Heart right ventricle (tissue), 16 donors: ENCODE measurements at regions of chr9 and their contacts with region 1.

Region 1: GRCh38 chr9:87157366-87158031 is 210.2 kb upstream of the GAS1 start:
- DNase-seq: no peak
- ATAC-seq: peak in 2 of 8 donors; percentile 19 to 45
- H3K4me3 ChIP-seq: no peak overlapping the region
- H3K27ac ChIP-seq: no peak overlapping the region
- H3K4me1 ChIP-seq: peaks cover 0 to 13% (median 0%) of the 10 kb centered on the region in 9 donors
- H3K27me3 ChIP-seq: no peaks in the 10 kb centered on the region
- CTCF ChIP-seq: no peak

Region 2: DNA sequence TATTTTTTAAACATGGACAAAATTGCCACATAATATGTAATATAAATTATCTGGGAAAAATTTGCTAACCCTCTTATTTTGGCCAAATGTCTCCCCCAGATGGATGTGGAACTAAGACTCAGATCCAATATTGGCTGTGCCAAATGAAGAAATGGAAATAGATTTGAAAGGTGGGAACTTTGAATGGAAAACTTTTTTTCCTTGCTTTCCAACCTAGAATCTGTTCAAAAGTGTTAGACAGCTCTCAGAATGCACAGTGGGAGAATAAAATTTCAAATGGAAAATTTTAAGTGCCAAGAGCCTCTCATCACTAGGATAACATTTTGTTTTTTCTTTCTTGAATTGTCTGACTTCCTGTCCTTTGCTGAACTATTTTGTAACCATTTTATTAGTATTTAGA is 67.6 kb before region 1 on chr9:
- intact Hi-C with region 1: loop called in 1 of 10 experiments (anchors 5 kb)
- DNase-seq: no peak
- ATAC-seq: peak in 6 of 8 donors; percentile 20 to 64 (median 57)
- H3K4me3 ChIP-seq: no peak overlapping the region
- H3K27ac ChIP-seq: peak overlapping the region in 7 of 10 donors; percentile 21 to 67 (median 57)
- H3K4me1 ChIP-seq: peaks cover 0 to 42% (median 21%) of the 10 kb centered on the region in 9 donors
- H3K27me3 ChIP-seq: peaks cover 0 to 14% (median 4%) of the 10 kb centered on the region in 7 donors
- CTCF ChIP-seq: no peak

Region 3: GRCh38 chr9:87223392-87224246 is 66.1 kb after region 1 on chr9:
- intact Hi-C with region 1: loop called in 1 of 10 experiments (anchors 10 kb)
- DNase-seq: no peak
- ATAC-seq: peak in 4 of 8 donors; percentile 16 to 70 (median 58)
- H3K4me3 ChIP-seq: peak overlapping the region in 1 of 10 donors; percentile 5
- H3K27ac ChIP-seq: no peak overlapping the region
- H3K4me1 ChIP-seq: peaks cover 0 to 8% (median 0%) of the 10 kb centered on the region in 9 donors
- H3K27me3 ChIP-seq: peaks cover 0 to 12% (median 0%) of the 10 kb centered on the region in 7 donors
- CTCF ChIP-seq: no peak

Region 4: DNA sequence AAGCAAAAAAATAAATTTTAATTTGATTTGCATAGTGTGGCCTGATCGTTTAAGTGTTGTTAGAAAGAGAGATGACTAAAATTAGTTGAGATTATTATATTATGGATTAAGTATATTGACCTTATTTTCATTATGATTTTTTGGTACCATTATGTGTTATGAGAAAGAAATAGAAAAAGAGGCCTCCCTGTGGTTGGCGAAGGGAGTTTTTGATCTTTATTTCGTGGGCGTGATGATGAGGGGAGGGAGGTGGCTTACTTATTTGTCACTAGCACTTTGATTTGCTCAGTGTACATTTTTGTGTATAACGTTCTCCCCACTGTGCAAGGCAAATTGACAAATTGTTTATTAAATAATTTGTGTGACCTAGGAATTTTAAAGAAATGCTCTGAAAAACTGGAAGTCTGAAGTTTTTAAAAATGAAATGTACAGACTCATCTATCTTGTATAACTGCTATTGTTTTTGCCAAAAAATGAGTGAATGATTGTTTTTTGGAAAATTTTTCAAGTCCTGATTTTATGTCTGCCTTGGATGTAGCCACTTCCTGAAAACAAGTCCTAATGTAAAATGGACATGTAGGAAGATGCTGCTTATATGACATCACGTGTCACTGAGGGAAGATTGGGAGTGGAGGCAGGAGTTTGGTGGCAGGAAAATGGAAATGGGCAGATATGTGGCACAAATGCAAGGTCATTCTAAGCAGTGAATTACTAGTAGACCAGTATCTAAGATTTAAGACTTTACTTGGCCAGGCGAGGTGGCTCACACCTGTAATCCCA is 343.2 kb after region 1 on chr9:
- intact Hi-C with region 1: no loop called
- DNase-seq: no peak
- ATAC-seq: no peak
- H3K4me3 ChIP-seq: peak overlapping the region in 1 of 10 donors; percentile 74
- H3K27ac ChIP-seq: peak overlapping the region in 1 of 10 donors; percentile 91
- H3K4me1 ChIP-seq: peaks cover 0 to 71% (median 12%) of the 10 kb centered on the region in 9 donors
- H3K27me3 ChIP-seq: peaks cover 7 to 42% (median 35%) of the 10 kb centered on the region in 7 donors
- CTCF ChIP-seq: no peak